ENCODE measurements at regions of chr14 and their contacts with region 1.

Region 1: DNA sequence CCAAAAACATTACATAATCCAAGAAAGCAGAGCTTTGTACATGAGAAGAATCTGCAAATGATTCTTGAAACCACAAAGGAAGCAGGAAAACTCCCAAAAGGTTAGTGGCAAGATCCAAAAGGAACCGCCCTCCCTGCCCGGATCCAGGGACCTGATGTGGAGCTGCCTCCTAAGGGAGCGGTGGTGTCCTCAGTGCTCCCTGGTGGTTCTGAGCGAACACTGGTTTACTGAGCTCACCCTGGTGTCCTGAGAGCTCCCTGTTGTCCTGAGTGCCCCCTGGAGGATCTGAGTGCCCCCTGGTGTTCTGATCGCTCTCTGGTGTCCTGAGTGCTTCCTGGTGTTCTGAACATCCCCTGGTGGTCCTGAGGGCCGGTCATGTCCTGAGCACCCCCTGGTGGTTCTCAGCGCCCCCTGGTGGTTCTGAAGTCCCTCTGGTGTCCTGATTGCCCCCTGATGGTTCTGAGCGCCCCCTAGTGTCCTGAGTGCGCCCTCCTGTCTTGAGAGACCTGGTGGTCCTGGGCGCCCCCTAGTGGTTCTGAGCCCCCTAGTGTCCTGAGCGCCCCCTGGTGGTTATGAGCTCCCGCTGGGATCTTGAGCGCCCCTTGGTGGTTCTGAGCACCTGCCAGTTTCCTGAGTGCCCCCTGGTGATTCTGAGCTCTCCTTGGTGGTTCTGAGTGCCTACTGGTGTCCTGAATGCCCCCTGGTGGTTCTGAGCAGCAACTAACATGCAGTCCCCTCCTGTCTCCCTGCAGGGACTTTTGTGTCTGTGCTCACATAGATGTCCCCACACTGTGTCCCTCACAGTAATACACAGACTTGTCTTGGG is 891.1 kb downstream of the TMEM121 start:
- DNase-seq: peak; percentile 89
- ATAC-seq: peak; percentile 73
- H3K4me3 ChIP-seq: no peak overlapping the region
- H3K4me3 Mint-ChIP-seq: no peak overlapping the region
- H3K27ac ChIP-seq: no peak overlapping the region
- H3K27ac Mint-ChIP-seq: peak overlapping the region; percentile 61
- H3K4me1 ChIP-seq: no peaks in the 10 kb centered on the region
- H3K4me1 Mint-ChIP-seq: no peaks in the 10 kb centered on the region
- H3K27me3 ChIP-seq: peaks cover 0 to 2% (median 0%) of the 10 kb centered on the region in 4 experiments
- H3K27me3 Mint-ChIP-seq: peaks cover 16% of the 10 kb centered on the region
- CTCF ChIP-seq: peak; percentile 91

Region 2: DNA sequence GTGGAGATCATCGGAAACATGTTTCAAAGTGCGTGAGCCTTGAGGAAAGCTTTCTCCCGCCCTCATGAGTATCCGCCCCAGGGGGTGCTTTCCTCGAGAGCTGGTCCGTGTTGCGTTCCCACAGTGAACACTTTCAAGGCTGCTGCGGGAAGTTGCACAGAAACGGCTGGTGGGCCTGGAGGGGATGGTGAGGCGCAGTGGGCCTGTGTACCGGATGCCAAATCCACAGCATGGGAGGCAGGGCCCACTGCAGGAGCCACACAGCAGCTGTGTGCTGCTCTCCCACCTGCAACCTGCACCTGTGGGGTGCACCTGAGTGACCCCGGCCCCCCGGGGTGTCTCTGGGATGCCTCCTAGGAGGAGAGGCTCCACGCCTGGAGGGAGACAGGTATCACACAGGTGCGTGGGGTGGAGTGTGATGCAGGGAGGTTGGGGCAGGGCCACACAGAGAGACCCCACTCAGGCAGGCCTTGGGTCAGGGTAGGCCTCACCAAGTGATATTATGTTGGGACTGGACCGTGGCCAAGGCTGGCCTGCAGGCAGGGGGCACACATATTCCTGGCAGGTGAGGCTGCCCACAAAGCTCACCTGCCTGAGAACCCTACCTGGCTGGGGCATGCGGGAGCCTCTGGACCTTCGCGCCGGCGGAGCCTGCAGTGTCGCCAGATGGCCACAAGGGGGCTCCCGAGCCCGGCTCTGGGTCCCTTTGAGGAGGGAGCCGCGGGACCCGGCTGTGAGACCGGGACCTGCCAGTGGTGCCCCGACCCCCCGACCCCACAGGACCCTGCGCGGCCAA is 879.9 kb before region 1 on chr14:
- CTCF ChIA-PET with region 1: interaction called, 8 read pairs
- POLR2A ChIA-PET with region 1: no interaction called
- intact Hi-C with region 1: loop called (anchors 10 kb)
- DNase-seq: peak; percentile 82
- ATAC-seq: peak; percentile 93
- H3K4me3 ChIP-seq: no peak overlapping the region
- H3K4me3 Mint-ChIP-seq: no peak overlapping the region
- H3K27ac ChIP-seq: no peak overlapping the region
- H3K27ac Mint-ChIP-seq: no peak overlapping the region
- H3K4me1 ChIP-seq: peaks cover 13 to 18% of the 10 kb centered on the region in 2 donors
- H3K4me1 Mint-ChIP-seq: peaks cover 17% of the 10 kb centered on the region
- H3K27me3 ChIP-seq: peaks cover 0 to 5% (median 0%) of the 10 kb centered on the region in 4 experiments
- H3K27me3 Mint-ChIP-seq: no peaks in the 10 kb centered on the region
- CTCF ChIP-seq: peak; percentile 98

Region 3: GRCh38 chr14:106163306-106163705 is 254.1 kb before region 1 on chr14:
- CTCF ChIA-PET with region 1: no interaction called
- POLR2A ChIA-PET with region 1: no interaction called
- intact Hi-C with region 1: no loop called
- DNase-seq: no peak
- ATAC-seq: no peak
- H3K4me3 ChIP-seq: no peak overlapping the region
- H3K4me3 Mint-ChIP-seq: no peak overlapping the region
- H3K27ac ChIP-seq: no peak overlapping the region
- H3K27ac Mint-ChIP-seq: no peak overlapping the region
- H3K4me1 ChIP-seq: no peaks in the 10 kb centered on the region
- H3K4me1 Mint-ChIP-seq: peaks cover 13% of the 10 kb centered on the region
- H3K27me3 ChIP-seq: peaks cover 0 to 5% (median 0%) of the 10 kb centered on the region in 4 experiments
- H3K27me3 Mint-ChIP-seq: peaks cover 21% of the 10 kb centered on the region
- CTCF ChIP-seq: no peak

Region 4: GRCh38 chr14:106372870-106373652 is 44.4 kb before region 1 on chr14:
- CTCF ChIA-PET with region 1: interaction called, 21 read pairs
- POLR2A ChIA-PET with region 1: no interaction called
- intact Hi-C with region 1: no loop called
- DNase-seq: peak; percentile 86
- ATAC-seq: peak; percentile 99
- H3K4me3 ChIP-seq: peak overlapping the region in 3 of 5 experiments; percentile 17 to 29 (median 24)
- H3K4me3 Mint-ChIP-seq: peak overlapping the region; percentile 55
- H3K27ac ChIP-seq: no peak overlapping the region
- H3K27ac Mint-ChIP-seq: peak overlapping the region; percentile 20
- H3K4me1 ChIP-seq: peaks cover 8 to 19% of the 10 kb centered on the region in 2 donors
- H3K4me1 Mint-ChIP-seq: peaks cover 20% of the 10 kb centered on the region
- H3K27me3 ChIP-seq: peaks cover 0 to 4% (median 0%) of the 10 kb centered on the region in 4 experiments
- H3K27me3 Mint-ChIP-seq: peaks cover 7% of the 10 kb centered on the region
- CTCF ChIP-seq: peak; percentile 85

Region 5: GRCh38 chr14:106547735-106548434 is 130.4 kb after region 1 on chr14:
- CTCF ChIA-PET with region 1: no interaction called
- POLR2A ChIA-PET with region 1: no interaction called
- intact Hi-C with region 1: no loop called
- DNase-seq: no peak
- ATAC-seq: no peak
- H3K4me3 ChIP-seq: no peak overlapping the region
- H3K4me3 Mint-ChIP-seq: no peak overlapping the region
- H3K27ac ChIP-seq: no peak overlapping the region
- H3K27ac Mint-ChIP-seq: no peak overlapping the region
- H3K4me1 ChIP-seq: no peaks in the 10 kb centered on the region
- H3K4me1 Mint-ChIP-seq: peaks cover 7% of the 10 kb centered on the region
- H3K27me3 ChIP-seq: no peaks in the 10 kb centered on the region
- H3K27me3 Mint-ChIP-seq: peaks cover 13% of the 10 kb centered on the region
- CTCF ChIP-seq: no peak

Measured in B cell (primary cell).